ENCODE measurements at regions of chr9 and their contacts with region 1.

Region 1: GRCh38 chr9:68832853-68833518 is 127.9 kb downstream of the PIP5K1B start:
- DNase-seq: no peak
- H3K4me3 ChIP-seq: no peak overlapping the region
- H3K27ac ChIP-seq: no peak overlapping the region
- H3K27me3 ChIP-seq: peaks cover 3% of the 10 kb centered on the region
- CTCF ChIP-seq: no peak

Region 2: DNA sequence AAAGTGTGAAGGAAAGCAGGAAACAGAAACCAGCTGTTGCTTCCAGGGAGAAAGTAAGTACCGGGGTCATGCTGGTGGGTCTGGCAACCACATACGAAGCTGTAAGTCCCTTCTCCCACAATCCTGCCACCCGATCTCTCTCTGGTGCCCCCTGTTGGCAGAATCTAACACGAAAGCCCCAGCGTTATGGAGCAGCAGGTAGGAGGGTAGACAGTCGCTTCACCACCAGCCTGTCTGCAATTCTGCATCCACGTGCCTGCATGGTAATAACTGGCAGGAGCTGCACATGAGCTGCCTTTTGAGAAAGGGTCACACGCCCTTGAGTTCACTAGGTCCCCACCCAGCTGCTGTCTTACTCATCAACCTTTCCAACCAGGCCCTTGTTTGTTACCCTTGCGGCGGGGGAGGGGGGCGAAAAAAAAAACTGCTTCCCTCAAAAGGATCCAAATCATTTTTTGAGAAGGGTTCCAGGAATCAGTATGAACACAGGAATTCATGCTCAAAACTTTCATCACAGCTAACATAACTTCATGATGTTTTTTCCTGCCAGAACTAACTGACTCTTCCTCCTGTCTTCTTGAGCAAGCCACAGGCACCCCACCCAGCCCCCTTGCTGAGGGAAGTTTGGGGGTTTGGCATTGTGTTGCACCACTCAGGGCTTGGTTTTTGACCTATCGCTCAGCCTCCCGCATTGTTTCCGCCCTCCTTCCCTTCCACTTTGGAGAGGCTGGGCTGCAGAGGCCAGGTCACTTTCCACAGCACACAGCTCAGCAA is 272.7 kb before region 1 on chr9:
- CTCF ChIA-PET with region 1: interaction called, 10 read pairs
- POLR2A ChIA-PET with region 1: no interaction called
- DNase-seq: peak; percentile 39
- H3K4me3 ChIP-seq: no peak overlapping the region
- H3K27ac ChIP-seq: peak overlapping the region; percentile 77
- H3K27me3 ChIP-seq: no peaks in the 10 kb centered on the region
- CTCF ChIP-seq: peak; percentile 46

Region 3: DNA sequence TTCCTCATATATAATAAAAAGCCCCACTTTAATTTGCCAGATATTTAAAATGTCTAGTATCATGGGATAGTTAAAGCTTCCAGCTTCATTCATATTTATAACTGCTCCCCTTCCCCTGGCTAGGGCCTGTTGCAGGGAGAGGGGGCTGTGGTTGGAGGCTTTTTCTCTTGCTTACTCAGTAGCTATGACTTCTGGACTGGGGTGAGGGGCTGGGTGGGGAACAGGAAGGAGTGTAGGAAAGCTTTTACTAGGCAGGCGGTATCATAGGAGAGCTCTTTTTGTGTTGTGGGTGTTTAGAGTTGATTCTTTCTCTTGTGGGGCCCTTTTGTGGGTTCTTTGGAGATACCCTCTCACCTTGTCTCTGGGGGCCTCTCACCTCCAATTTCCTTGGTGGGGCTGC is 88.6 kb before region 1 on chr9:
- CTCF ChIA-PET with region 1: interaction called, 10 read pairs
- POLR2A ChIA-PET with region 1: no interaction called
- DNase-seq: no peak
- H3K4me3 ChIP-seq: no peak overlapping the region
- H3K27ac ChIP-seq: no peak overlapping the region
- H3K27me3 ChIP-seq: peaks cover 2% of the 10 kb centered on the region
- CTCF ChIP-seq: no peak

Region 4: GRCh38 chr9:69136779-69137178 is 303.8 kb after region 1 on chr9:
- CTCF ChIA-PET with region 1: no interaction called
- POLR2A ChIA-PET with region 1: no interaction called
- DNase-seq: no peak
- H3K4me3 ChIP-seq: no peak overlapping the region
- H3K27ac ChIP-seq: no peak overlapping the region
- H3K27me3 ChIP-seq: no peaks in the 10 kb centered on the region
- CTCF ChIP-seq: no peak